CD8-positive, alpha-beta T cell (primary cell): ENCODE measurements at regions of chr6 and their contacts with region 1.

Region 1: DNA sequence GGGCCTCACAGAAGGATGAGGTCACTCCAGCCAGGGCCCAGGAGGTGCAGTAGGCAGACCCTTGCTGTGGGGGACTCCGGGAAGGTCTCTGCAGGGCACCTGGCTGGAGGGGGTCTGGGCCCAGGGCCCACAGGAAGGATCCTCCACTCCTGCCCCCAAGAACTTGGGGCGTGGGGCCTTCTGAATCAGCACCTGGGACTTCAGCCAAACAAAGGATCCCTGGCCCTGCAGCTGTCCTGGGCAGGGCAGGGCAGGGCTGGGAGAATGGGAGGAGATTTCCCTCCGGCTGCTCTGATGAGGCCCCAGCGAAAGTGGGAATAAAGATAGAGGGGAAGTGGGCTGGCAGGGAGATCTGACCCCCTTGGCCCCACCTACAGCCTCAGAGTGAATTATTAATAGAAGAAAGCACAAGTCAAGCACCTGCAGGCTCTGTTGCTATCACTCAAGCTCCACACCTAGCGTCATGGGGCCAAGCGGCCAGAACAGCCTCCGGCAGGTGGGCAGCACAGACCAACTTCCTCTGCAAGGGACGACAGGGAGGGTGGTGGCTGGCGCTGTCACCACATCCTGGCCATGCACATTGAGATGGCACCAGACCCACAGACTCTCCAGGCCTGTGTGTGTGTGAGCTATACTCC is 61.6 kb upstream of the MRPS10 start:
- DNase-seq: peak in 7 of 9 experiments; percentile 27 to 74 (median 50)
- ATAC-seq: peak; percentile 10
- H3K4me3 ChIP-seq: no peak overlapping the region
- H3K4me3 Mint-ChIP-seq: peak overlapping the region; percentile 64
- H3K27ac ChIP-seq: peak overlapping the region; percentile 59 to 72
- H3K27ac Mint-ChIP-seq: peak overlapping the region; percentile 88
- H3K4me1 ChIP-seq: peaks cover 54% of the 10 kb centered on the region
- H3K4me1 Mint-ChIP-seq: peaks cover 52% of the 10 kb centered on the region
- H3K27me3 ChIP-seq: no peaks in the 10 kb centered on the region
- H3K27me3 Mint-ChIP-seq: no peaks in the 10 kb centered on the region
- CTCF ChIP-seq: no peak

Region 2: DNA sequence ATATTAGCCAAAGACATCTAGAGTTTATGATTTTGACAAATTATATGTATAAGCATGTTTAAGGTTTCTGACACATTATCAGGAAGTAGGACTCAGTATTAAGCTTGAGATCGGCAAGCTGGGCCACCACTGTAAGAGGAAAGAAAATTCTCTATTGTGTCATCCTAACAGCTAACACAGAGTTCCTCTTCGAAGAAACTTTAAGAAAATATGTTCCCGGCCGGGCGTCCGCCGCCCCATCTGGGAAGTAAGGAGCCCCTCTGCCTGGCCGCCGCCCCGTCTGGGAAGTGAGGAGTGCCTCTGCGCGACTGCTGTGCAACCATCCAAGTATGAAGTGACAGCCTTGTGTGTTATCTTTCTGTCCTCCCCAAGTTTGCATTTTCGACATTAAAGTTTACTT is 407.1 kb before region 1 on chr6:
- CTCF ChIA-PET with region 1: no interaction called
- POLR2A ChIA-PET with region 1: no interaction called
- intact Hi-C with region 1: no loop called
- DNase-seq: no peak
- ATAC-seq: no peak
- H3K4me3 ChIP-seq: no peak overlapping the region
- H3K4me3 Mint-ChIP-seq: no peak overlapping the region
- H3K27ac ChIP-seq: no peak overlapping the region
- H3K27ac Mint-ChIP-seq: no peak overlapping the region
- H3K4me1 ChIP-seq: no peaks in the 10 kb centered on the region
- H3K4me1 Mint-ChIP-seq: no peaks in the 10 kb centered on the region
- H3K27me3 ChIP-seq: no peaks in the 10 kb centered on the region
- H3K27me3 Mint-ChIP-seq: no peaks in the 10 kb centered on the region
- CTCF ChIP-seq: no peak

Region 3: GRCh38 chr6:42292004-42292740 is 12.9 kb after region 1 on chr6:
- CTCF ChIA-PET with region 1: interaction called, 5 read pairs
- POLR2A ChIA-PET with region 1: interaction called, 5 read pairs
- intact Hi-C with region 1: loop called in 1 of 2 experiments (anchors 2 kb)
- DNase-seq: peak in 4 of 9 experiments; percentile 32 to 61 (median 42)
- ATAC-seq: peak; percentile 53
- H3K4me3 ChIP-seq: no peak overlapping the region
- H3K4me3 Mint-ChIP-seq: no peak overlapping the region
- H3K27ac ChIP-seq: peak overlapping the region in 1 of 2 experiments; percentile 65
- H3K27ac Mint-ChIP-seq: peak overlapping the region; percentile 72
- H3K4me1 ChIP-seq: peaks cover 52% of the 10 kb centered on the region
- H3K4me1 Mint-ChIP-seq: peaks cover 70% of the 10 kb centered on the region
- H3K27me3 ChIP-seq: no peaks in the 10 kb centered on the region
- H3K27me3 Mint-ChIP-seq: no peaks in the 10 kb centered on the region
- CTCF ChIP-seq: no peak